PC-9 (cell line): ENCODE measurements at regions of chr2 and their contacts with region 1.

Region 1: DNA sequence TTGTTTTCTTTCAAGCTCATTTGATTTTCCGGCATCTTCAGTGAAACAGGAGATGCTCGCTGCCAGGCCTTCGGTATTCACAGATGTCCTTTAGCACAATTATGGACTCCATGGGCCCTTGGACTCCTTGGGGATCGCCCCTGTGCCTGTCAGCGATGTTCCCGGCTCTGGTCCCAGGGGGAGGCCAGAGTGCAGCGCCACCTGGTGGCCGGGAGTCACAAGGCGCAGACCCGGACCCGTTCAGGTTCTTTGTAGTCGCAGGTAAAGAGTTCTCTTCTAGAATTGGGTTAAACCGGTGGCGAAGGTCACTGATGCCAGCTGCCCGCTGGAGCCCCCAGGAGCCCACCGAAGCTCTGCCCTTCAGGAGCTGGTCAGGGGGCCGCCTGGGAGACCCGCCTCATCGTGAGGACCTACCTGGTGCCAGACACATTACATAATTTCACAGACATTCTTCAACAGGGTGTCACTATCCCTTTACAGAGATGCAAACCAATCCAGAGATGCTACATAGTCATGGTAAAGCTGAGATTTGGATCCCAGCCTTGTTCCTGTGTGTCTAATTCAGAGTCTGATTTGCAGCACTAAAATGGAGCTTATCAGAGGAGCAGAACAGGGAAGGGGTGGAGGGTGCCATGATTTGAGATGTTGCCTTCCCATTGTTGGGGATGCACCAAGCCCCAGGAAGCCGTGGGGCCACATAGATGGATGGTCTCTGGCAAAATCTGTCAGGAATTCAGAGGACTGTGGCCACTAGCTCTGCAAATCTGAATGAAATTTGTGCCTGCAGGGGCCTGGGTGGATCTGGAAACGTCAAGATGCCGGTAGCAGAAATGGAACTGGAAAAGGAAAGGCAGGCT is 6.0 kb upstream of the INPP5D start:
- DNase-seq: peak in 1 of 2 experiments; percentile 64
- H3K4me3 ChIP-seq: no peak overlapping the region
- H3K27ac ChIP-seq: no peak overlapping the region
- H3K4me1 ChIP-seq: peaks cover 32% of the 10 kb centered on the region
- H3K27me3 ChIP-seq: no peaks in the 10 kb centered on the region
- CTCF ChIP-seq: peak; percentile 97

Region 2: GRCh38 chr2:232890896-232891601 is 163.1 kb before region 1 on chr2:
- CTCF ChIA-PET with region 1: no interaction called
- POLR2A ChIA-PET with region 1: no interaction called
- intact Hi-C with region 1: loop called (anchors 10 kb)
- DNase-seq: peak; percentile 62 to 99
- H3K4me3 ChIP-seq: no peak overlapping the region
- H3K27ac ChIP-seq: no peak overlapping the region
- H3K4me1 ChIP-seq: peaks cover 3% of the 10 kb centered on the region
- H3K27me3 ChIP-seq: no peaks in the 10 kb centered on the region
- CTCF ChIP-seq: no peak

Region 3: DNA sequence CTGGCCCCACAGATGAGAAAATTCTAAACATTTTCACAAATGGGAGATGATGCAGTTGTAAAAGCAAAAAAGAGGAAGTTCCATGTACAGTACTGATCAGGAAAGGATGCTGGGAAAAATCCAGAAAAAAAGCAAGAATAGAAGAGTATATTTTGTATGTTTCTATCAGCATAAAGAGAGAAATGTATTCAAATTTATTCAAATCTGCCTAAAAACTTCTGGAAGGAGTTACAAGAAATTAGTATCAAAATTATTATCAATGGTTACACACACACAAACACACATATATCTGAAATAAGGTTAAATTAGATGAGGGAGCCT is 65.4 kb before region 1 on chr2:
- CTCF ChIA-PET with region 1: no interaction called
- POLR2A ChIA-PET with region 1: no interaction called
- intact Hi-C with region 1: loop called (anchors 1 kb)
- DNase-seq: no peak
- H3K4me3 ChIP-seq: 0 out of 2 replicates have a peak overlapping the region, but pooled peaks have one; percentile 19
- H3K27ac ChIP-seq: peak overlapping the region; percentile 95
- H3K4me1 ChIP-seq: peaks cover 50% of the 10 kb centered on the region
- H3K27me3 ChIP-seq: no peaks in the 10 kb centered on the region
- CTCF ChIP-seq: no peak

Region 4: GRCh38 chr2:233012301-233012971 is 41.7 kb before region 1 on chr2:
- CTCF ChIA-PET with region 1: no interaction called
- POLR2A ChIA-PET with region 1: no interaction called
- intact Hi-C with region 1: no loop called
- DNase-seq: no peak
- H3K4me3 ChIP-seq: no peak overlapping the region
- H3K27ac ChIP-seq: no peak overlapping the region
- H3K4me1 ChIP-seq: no peaks in the 10 kb centered on the region
- H3K27me3 ChIP-seq: no peaks in the 10 kb centered on the region
- CTCF ChIP-seq: no peak

Region 5: DNA sequence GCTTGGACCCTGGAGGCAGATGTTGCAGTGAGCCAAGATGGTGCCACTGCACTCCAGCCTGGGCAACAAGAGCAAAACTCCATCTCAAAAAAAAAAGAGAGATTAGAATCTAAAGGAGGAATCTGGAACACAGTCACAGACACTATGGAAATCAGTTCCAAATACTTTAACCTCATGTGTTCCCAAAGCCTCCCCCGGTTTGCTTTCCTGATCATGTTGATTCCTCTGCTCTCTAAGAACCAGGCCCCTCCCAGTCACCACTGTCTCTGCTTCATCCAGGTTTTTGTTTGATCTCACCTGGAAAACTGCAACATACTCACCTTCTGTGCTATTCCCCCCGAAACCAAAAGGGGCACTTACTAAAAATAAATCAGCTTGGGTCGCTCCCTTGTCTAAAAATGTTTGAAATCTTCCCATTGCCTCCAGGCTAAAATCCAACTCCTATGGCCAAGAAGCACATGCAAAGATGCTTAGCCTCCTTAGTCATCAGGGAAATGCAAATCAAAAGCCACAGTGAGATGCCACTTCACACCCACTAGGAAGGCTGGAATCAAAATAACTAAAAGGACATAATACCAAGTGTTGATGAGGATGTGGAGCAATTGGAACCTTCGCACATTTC is 27.9 kb before region 1 on chr2:
- CTCF ChIA-PET with region 1: interaction called, 3 read pairs
- POLR2A ChIA-PET with region 1: no interaction called
- intact Hi-C with region 1: loop called (anchors 1 kb)
- DNase-seq: peak; percentile 69 to 97
- H3K4me3 ChIP-seq: no peak overlapping the region
- H3K27ac ChIP-seq: peak overlapping the region; percentile 72
- H3K4me1 ChIP-seq: peaks cover 45% of the 10 kb centered on the region
- H3K27me3 ChIP-seq: no peaks in the 10 kb centered on the region
- CTCF ChIP-seq: peak; percentile 51

Region 6: GRCh38 chr2:233165895-233166661 is 111.9 kb after region 1 on chr2:
- CTCF ChIA-PET with region 1: no interaction called
- POLR2A ChIA-PET with region 1: no interaction called
- intact Hi-C with region 1: loop called (anchors 1 kb)
- DNase-seq: peak; percentile 97 to 99
- H3K4me3 ChIP-seq: no peak overlapping the region
- H3K27ac ChIP-seq: peak overlapping the region; percentile 76
- H3K4me1 ChIP-seq: peaks cover 53% of the 10 kb centered on the region
- H3K27me3 ChIP-seq: no peaks in the 10 kb centered on the region
- CTCF ChIP-seq: no peak

Region 7: GRCh38 chr2:233210843-233211547 is 156.8 kb after region 1 on chr2:
- CTCF ChIA-PET with region 1: no interaction called
- POLR2A ChIA-PET with region 1: interaction called, 3 read pairs
- intact Hi-C with region 1: loop called (anchors 5 kb)
- DNase-seq: peak; percentile 92 to 97
- H3K4me3 ChIP-seq: no peak overlapping the region
- H3K27ac ChIP-seq: peak overlapping the region; percentile 28; the same call in 1 of the 2 replicates
- H3K4me1 ChIP-seq: peaks cover 57% of the 10 kb centered on the region
- H3K27me3 ChIP-seq: no peaks in the 10 kb centered on the region
- CTCF ChIP-seq: no peak

Region 8: DNA sequence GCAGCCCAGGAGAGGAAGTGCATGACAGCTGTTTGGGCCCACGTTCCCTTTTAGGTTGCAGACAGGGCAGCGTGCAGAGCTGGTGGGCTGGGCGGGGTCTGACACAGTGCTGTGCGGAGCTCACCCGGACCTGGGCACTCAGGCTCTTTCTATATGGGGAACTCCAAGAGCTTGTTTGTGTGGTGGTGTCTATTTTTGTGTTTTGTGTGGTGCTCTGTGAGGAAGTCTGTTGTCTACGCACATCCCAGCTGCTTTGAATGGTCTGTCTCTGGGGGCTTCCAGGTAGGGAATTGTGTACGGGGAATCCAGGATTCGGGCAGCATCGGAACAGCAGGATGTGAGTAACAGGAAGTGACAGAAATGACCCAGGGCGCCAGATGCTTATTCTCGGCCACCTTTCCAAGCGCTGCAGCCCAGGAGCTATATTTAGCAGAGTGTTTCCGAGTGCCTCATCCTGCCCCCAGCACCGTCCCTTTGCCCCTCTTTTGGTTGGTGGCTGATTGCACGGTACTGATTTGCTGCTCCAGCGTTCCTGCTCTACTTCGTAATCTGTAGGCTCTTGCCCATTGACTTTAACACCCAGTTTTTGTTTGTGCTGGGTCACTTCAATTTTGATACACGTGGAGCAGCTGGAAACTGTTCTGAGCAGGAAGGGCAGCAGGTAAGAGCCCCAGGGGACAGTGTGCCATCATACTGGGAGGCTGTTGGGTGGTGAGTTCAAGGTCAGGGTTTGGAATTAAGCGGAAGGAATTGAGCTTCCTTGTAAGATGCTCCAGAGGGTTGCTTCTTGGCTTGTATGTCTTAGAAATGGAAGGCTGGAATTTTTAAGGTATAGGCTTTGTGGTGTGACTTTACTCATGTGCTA is 364.8 kb after region 1 on chr2:
- CTCF ChIA-PET with region 1: interaction called, 21 read pairs
- POLR2A ChIA-PET with region 1: no interaction called
- intact Hi-C with region 1: no loop called
- DNase-seq: no peak
- H3K4me3 ChIP-seq: no peak overlapping the region
- H3K27ac ChIP-seq: no peak overlapping the region
- H3K4me1 ChIP-seq: peaks cover 57% of the 10 kb centered on the region
- H3K27me3 ChIP-seq: no peaks in the 10 kb centered on the region
- CTCF ChIP-seq: no peak